Activated T-helper 2 cell treated with anti-CD3 and anti-CD28 coated beads, Interferon-gamma antibody, Interleukin-2, Interleukin-4, amounts not matched to agents 10 μg/mL and 5 μg/mL and 100 μg/mL, durations not matched to agents 14 hours and 24 hours and 36 hours (primary cell): ENCODE measurements at regions of chr6 and their contacts with region 1.

Region 1: GRCh38 chr6:142146828-142147662 is at the starts of genes NMBR and VTA1:
- DNase-seq: peak; percentile 95
- H3K4me3 Mint-ChIP-seq: peak within 1 kb of the TSS; percentile 91
- H3K27ac Mint-ChIP-seq: peak within 1 kb of the TSS; percentile 59
- H3K4me1 Mint-ChIP-seq: peaks cover 31% of the 10 kb centered on the region
- H3K27me3 Mint-ChIP-seq: no peaks in the 10 kb centered on the region
- total RNA-seq, gene NMBR: not detected in 2 replicates
- total RNA-seq, gene VTA1: 49.5 and 49.9 TPM in 2 replicates

Region 2: DNA sequence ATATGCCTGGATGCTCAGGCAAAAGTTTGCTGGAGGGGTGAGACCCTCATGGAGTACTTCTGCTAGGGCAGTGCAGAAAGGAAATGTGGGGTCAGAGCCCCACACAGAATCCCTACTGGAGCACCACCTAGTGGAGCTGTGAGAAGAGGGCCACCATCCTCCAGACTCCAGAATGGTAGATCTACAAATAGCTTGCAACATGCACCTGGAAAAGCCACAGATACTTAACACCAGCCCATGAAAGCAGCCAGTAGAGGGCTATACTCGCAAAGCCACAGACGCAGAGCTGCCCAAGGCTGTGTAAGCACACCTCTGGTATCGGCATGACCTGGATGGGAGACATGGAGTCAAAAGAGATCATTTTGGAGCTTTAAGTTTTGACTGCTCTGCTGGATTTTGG is 75.1 kb before region 1 on chr6:
- intact Hi-C with region 1: no loop called
- DNase-seq: no peak
- H3K4me3 Mint-ChIP-seq: no peak overlapping the region
- H3K27ac Mint-ChIP-seq: no peak overlapping the region
- H3K4me1 Mint-ChIP-seq: peaks cover 3% of the 10 kb centered on the region
- H3K27me3 Mint-ChIP-seq: no peaks in the 10 kb centered on the region

Region 3: GRCh38 chr6:142207265-142207877 is 60.3 kb after region 1 on chr6:
- intact Hi-C with region 1: loop called (anchors 1 kb)
- DNase-seq: no peak
- H3K4me3 Mint-ChIP-seq: no peak overlapping the region
- H3K27ac Mint-ChIP-seq: no peak overlapping the region
- H3K4me1 Mint-ChIP-seq: no peaks in the 10 kb centered on the region
- H3K27me3 Mint-ChIP-seq: no peaks in the 10 kb centered on the region

Region 4: GRCh38 chr6:142395768-142396231 is 248.8 kb after region 1 on chr6:
- intact Hi-C with region 1: loop called (anchors 2 kb)
- DNase-seq: no peak
- H3K4me3 Mint-ChIP-seq: no peak overlapping the region
- H3K27ac Mint-ChIP-seq: no peak overlapping the region
- H3K4me1 Mint-ChIP-seq: peaks cover 12% of the 10 kb centered on the region
- H3K27me3 Mint-ChIP-seq: peaks cover 61% of the 10 kb centered on the region

Region 5: GRCh38 chr6:142474531-142475289 is 327.7 kb after region 1 on chr6:
- intact Hi-C with region 1: loop called (anchors 10 kb)
- DNase-seq: no peak
- H3K4me3 Mint-ChIP-seq: no peak overlapping the region
- H3K27ac Mint-ChIP-seq: no peak overlapping the region
- H3K4me1 Mint-ChIP-seq: peaks cover 3% of the 10 kb centered on the region
- H3K27me3 Mint-ChIP-seq: peaks cover 8% of the 10 kb centered on the region

Region 6: GRCh38 chr6:142566628-142567396 is 419.8 kb after region 1 on chr6:
- intact Hi-C with region 1: loop called (anchors 10 kb)
- DNase-seq: peak; percentile 14
- H3K4me3 Mint-ChIP-seq: no peak overlapping the region
- H3K27ac Mint-ChIP-seq: no peak overlapping the region
- H3K4me1 Mint-ChIP-seq: peaks cover 19% of the 10 kb centered on the region
- H3K27me3 Mint-ChIP-seq: no peaks in the 10 kb centered on the region